Left cardiac atrium (tissue), 4 donors: ENCODE measurements at regions of chr5 and their contacts with region 1.

Region 1: GRCh38 chr5:135944967-135945560 is 9.7 kb downstream of the LECT2 start:
- DNase-seq: peak; percentile 44
- ATAC-seq: peak; percentile 53 to 59

Region 2: DNA sequence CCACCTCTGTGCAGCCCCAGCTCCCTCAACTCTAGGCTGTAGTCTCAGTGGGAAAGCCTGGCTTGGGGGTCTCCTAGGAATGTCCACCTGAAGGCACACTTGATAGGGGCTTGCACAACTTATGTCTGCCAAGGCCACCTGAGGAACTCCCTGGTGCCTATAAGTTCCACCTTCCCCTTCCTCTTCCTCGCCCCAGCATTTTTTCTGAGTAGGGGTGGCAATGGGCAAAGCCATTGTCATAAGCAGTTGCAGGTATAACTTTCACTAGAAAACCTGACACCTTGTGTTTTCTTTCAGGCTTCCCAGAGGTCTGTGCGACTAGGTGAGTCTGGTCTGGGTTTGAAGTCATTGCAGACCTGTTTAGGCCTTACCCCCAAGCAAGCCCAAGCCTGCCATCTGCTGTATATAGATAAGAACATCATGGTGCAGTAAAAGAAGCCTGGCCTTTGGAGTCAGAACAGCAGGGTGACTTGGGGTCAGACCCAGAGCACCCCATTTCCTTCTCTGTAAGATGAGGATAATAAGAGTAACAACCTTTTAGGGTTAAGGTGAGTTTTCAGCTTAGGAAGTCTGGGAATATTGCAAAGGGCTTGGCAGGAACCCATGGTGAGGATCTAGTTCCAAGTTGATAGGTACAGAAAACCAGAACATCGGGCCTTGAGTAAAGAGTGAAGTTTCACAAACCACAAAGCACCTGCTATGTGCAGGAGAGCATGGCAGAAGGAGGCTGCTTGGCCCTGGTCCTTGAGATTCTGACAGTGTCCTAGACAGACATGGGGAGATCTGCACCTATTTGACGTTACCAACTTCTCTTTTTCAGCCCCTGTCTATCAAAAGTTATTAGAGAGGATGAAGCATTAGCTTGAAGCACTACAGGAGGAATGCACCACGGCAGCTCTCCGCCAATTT is 117.6 kb after region 1 on chr5:
- intact Hi-C with region 1: loop called (anchors 2 to 10 kb)
- DNase-seq: no peak
- ATAC-seq: no peak

Region 3: DNA sequence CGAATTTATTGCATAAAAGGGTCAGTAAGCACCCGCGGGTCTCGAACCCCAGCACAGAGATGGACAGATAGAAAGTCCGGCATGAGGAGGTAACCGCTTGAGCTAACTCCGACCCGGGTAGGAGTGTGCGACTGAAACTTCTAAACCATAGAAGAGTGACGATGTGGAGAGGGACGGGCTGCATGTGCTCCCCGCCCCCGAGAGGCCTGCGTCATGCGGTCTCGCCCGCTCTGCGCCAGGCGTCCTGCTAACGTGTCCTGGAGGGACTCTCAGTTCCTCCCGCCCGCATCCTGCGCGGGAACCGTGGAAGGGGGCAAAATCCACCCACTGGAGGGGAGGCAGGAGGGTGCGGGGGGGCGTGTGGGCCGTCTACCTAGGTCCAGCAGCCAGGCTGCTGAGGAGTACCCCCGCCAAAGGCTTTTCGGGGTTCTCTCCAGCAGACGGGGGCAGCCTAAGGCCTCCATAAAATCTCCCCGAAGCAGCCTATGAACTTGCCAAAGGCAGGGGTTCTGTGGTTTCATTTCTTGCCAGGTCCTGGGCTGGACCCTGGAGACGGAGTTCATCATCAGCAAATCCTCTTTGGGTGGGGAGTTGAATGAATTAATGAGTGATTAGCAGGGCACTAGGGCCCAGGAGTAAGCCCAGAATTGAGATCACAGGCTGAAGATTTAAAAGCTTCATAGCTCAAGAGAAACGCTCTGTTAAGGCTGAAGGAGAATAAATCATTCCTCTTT is 135.6 kb after region 1 on chr5:
- intact Hi-C with region 1: loop called in 1 of 2 experiments (anchors 5 kb)
- DNase-seq: peak; percentile 89
- ATAC-seq: peak; percentile 91 to 97

Region 4: GRCh38 chr5:136174021-136174659 is 229.1 kb after region 1 on chr5:
- intact Hi-C with region 1: loop called (anchors 5 to 10 kb)
- DNase-seq: no peak
- ATAC-seq: peak in 1 of 2 donors; percentile 52

Region 5: GRCh38 chr5:136212252-136212721 is 267.2 kb after region 1 on chr5:
- intact Hi-C with region 1: loop called in 1 of 2 experiments (anchors 10 kb)
- DNase-seq: peak; percentile 62
- ATAC-seq: peak in 1 of 2 donors; percentile 41